ENCODE measurements at regions of chr22 and their contacts with region 1.

Region 1: GRCh38 chr22:36065775-36066559 is 37.3 kb upstream of the RBFOX2 start:
- DNase-seq: peak; percentile 63
- H3K4me3 Mint-ChIP-seq: peak overlapping the region; percentile 73
- H3K27ac Mint-ChIP-seq: peak overlapping the region; percentile 81
- H3K4me1 Mint-ChIP-seq: peaks cover 10% of the 10 kb centered on the region
- H3K27me3 Mint-ChIP-seq: peaks cover 4% of the 10 kb centered on the region

Region 2: GRCh38 chr22:36028646-36029405 is 37.1 kb before region 1 on chr22 and contains the start of gene RBFOX2:
- CTCF ChIA-PET with region 1: interaction called, 24 read pairs
- POLR2A ChIA-PET with region 1: no interaction called
- DNase-seq: peak; percentile 65
- H3K4me3 Mint-ChIP-seq: peak within 1 kb of the TSS; percentile 85
- H3K27ac Mint-ChIP-seq: peak within 1 kb of the TSS; percentile 3
- H3K4me1 Mint-ChIP-seq: peaks cover 16% of the 10 kb centered on the region
- H3K27me3 Mint-ChIP-seq: peaks cover 29% of the 10 kb centered on the region
- total RNA-seq, gene RBFOX2: 0.77 to 0.99 TPM

Region 3: DNA sequence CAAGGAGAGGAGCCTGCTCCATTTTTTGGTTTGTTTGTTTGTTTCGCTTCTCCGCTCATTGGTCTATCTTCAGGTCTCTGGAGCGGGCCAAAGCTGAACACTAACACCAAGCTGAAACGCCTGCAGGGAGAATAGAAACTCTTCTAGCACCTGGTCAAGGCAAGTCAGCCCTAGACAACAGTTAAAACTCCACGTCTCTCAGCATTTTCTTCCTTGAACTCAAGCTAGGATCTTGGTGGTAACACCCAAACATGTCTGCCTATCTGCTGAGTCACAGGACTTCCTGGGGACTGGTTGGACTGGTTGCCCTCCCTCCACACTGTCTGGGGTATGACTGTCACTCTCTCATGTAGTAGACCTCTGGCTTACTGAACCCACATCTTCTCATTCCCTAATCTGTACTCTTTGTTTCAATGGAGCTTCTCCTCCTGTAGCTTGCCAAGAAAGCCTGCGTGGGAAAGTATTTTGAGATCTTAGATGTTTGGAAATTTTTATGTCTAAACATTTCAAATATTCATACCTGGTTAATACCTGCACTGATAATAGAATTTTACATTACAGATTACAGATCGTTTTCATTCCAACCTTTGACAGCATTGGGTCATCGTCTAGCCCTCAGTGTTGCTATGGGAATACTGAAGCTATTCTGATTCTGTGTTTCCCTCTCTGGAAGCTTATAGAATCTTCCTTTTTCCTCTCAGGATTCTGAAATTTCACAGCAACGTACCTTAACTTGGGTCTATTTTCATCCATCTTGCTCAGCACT is 13.3 kb before region 1 on chr22:
- CTCF ChIA-PET with region 1: interaction called, 36 read pairs
- POLR2A ChIA-PET with region 1: no interaction called
- DNase-seq: no peak
- H3K4me3 Mint-ChIP-seq: no peak overlapping the region
- H3K27ac Mint-ChIP-seq: no peak overlapping the region
- H3K4me1 Mint-ChIP-seq: peaks cover 9% of the 10 kb centered on the region
- H3K27me3 Mint-ChIP-seq: peaks cover 6% of the 10 kb centered on the region

Region 4: GRCh38 chr22:36081023-36081431 is 15.1 kb after region 1 on chr22:
- CTCF ChIA-PET with region 1: interaction called, 83 read pairs
- POLR2A ChIA-PET with region 1: no interaction called
- DNase-seq: no peak
- H3K4me3 Mint-ChIP-seq: no peak overlapping the region
- H3K27ac Mint-ChIP-seq: no peak overlapping the region
- H3K4me1 Mint-ChIP-seq: peaks cover 5% of the 10 kb centered on the region
- H3K27me3 Mint-ChIP-seq: peaks cover 2% of the 10 kb centered on the region

Region 5: GRCh38 chr22:36197514-36198146 is 131.7 kb after region 1 on chr22:
- CTCF ChIA-PET with region 1: no interaction called
- POLR2A ChIA-PET with region 1: no interaction called
- DNase-seq: peak; percentile 19
- H3K4me3 Mint-ChIP-seq: no peak overlapping the region
- H3K27ac Mint-ChIP-seq: peak overlapping the region; percentile 63
- H3K4me1 Mint-ChIP-seq: peaks cover 37% of the 10 kb centered on the region
- H3K27me3 Mint-ChIP-seq: peaks cover 2% of the 10 kb centered on the region